Activated CD4-positive, alpha-beta T cell treated with anti-CD3 and anti-CD28 coated beads, Interleukin-2, amount 10 ng/mL, durations not matched to agents 7 days and 5 days (primary cell): ENCODE measurements at regions of chr12 and their contacts with region 1.

Region 1: GRCh38 chr12:52249051-52249461 is 16.0 kb downstream of the KRT7 start:
- DNase-seq: no peak
- H3K4me3 Mint-ChIP-seq: no peak overlapping the region
- H3K27ac Mint-ChIP-seq: peak overlapping the region; percentile 3
- H3K4me1 Mint-ChIP-seq: peaks cover 70% of the 10 kb centered on the region
- H3K27me3 Mint-ChIP-seq: peaks cover 9% of the 10 kb centered on the region

Region 2: DNA sequence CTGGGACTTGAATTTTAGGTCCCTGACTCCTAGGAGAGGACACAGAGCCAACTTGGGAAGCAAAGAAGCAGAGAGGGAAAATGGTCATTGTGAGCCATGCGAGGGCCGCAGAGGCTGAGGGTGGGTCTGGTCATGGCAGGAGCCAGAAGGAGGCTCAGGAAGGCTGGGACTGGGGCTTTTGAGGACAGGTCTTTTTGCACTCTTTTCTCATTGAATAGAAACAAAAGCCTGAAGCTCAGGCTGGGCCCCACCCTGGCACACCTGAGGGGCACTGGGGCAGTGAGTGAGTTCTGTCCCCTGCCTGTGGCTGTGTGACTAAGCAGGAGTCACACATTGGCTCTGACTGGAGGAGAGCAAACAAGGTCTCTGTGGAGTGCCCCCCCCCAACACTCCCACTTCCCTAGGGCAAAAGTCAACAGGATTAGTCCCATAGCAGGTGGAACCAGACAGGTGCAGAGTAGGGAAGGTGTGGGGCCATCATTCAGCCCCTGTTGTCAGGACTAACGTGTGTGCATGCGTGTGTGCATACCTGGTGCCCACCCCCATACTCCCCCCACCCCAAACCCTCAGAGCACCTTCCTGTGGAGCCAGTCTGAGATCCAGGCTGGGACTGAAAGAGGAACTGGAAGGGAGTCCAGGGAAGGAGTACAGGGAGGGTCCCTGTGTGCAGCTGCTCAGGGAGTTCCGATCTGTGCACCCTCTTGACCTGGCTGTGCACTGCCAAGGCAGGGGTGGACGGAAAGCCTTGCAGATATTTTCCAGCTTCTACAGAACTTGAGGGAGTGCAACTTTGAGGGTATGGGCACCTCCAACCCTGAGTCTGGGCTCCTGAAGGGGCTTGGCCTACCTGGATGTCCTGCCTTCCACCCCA is 13.0 kb before region 1 on chr12:
- CTCF ChIA-PET with region 1: interaction called, 10 read pairs
- POLR2A ChIA-PET with region 1: no interaction called
- DNase-seq: no peak
- H3K4me3 Mint-ChIP-seq: no peak overlapping the region
- H3K27ac Mint-ChIP-seq: no peak overlapping the region
- H3K4me1 Mint-ChIP-seq: no peaks in the 10 kb centered on the region
- H3K27me3 Mint-ChIP-seq: peaks cover 41% of the 10 kb centered on the region

Region 3: DNA sequence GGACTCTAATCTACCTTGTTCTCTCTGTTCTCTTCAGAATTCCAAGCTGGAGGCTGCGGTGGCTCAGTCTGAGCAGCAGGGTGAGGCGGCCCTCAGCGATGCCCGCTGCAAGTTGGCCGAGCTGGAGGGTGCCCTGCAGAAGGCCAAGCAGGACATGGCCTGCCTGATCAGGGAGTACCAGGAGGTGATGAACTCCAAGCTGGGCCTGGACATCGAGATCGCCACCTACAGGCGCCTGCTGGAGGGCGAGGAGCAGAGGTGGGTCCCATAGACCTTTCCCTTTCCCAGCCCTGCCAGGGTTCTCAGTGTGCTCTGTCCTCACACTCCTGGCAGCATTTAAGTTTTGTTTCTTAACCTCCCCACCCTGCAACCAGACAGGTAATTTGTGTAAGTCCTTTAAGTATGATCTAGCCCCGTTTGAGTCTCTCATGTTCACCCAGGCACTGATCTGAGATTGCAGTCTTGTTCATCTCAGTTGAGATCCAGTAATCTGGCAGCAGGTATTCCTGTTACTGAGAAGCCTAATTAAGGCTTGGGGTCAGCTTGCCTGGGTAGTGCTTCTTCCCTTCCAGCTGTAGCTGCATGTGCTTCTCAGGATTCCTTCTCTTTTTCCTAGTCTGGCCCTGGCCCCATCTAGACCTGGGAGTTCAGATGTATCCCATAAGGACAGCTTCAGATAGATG is 57.1 kb after region 1 on chr12:
- CTCF ChIA-PET with region 1: no interaction called
- POLR2A ChIA-PET with region 1: no interaction called
- DNase-seq: no peak
- H3K4me3 Mint-ChIP-seq: no peak overlapping the region
- H3K27ac Mint-ChIP-seq: no peak overlapping the region
- H3K4me1 Mint-ChIP-seq: peaks cover 19% of the 10 kb centered on the region
- H3K27me3 Mint-ChIP-seq: peaks cover 50% of the 10 kb centered on the region